Esophagus muscularis mucosa (tissue), 4 donors: ENCODE measurements at regions of chr9 and their contacts with region 1.

Region 1: GRCh38 chr9:95004411-95005277 is 278.1 kb downstream of the AOPEP start:
- DNase-seq: no peak
- H3K4me3 ChIP-seq: peak overlapping the region; percentile 74 to 93 (median 90)
- H3K27ac ChIP-seq: peak overlapping the region; percentile 98 to 100 (median 98)
- H3K4me1 ChIP-seq: peaks cover 13 to 58% (median 53%) of the 10 kb centered on the region in 4 donors
- H3K27me3 ChIP-seq: no peaks in the 10 kb centered on the region
- CTCF ChIP-seq: no peak
- EP300 ChIP-seq: no peak
- POLR2A ChIP-seq: no peak

Region 2: GRCh38 chr9:94783102-94783664 is 221.5 kb before region 1 on chr9:
- intact Hi-C with region 1: loop called (anchors 5 kb)
- DNase-seq: no peak
- H3K4me3 ChIP-seq: no peak overlapping the region
- H3K27ac ChIP-seq: peak overlapping the region; percentile 13 to 40 (median 31)
- H3K4me1 ChIP-seq: peaks cover 9 to 16% (median 12%) of the 10 kb centered on the region in 4 donors
- H3K27me3 ChIP-seq: no peaks in the 10 kb centered on the region
- CTCF ChIP-seq: peak; percentile 67 to 81 (median 77)
- EP300 ChIP-seq: no peak
- POLR2A ChIP-seq: no peak

Region 3: DNA sequence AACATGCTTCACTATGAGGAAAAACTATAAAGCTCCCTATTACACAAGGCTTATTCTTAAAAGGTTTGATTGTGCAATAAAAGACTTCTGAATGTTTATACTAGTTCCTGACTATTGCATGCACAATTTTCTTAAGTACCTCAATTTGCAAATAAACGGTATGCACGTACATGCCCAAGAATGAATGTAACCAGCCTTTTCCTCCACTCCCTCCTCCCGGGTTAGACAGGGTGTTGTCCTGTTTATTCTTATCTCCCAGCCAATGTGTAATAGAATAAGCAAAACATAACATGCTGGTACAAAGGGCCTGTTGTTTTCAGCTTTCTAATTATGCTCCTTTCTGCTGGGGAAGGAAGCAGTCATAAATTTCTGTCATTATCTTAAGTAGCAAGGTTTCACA is 199.1 kb before region 1 on chr9:
- intact Hi-C with region 1: loop called (anchors 5 kb)
- DNase-seq: no peak
- H3K4me3 ChIP-seq: no peak overlapping the region
- H3K27ac ChIP-seq: peak overlapping the region; percentile 16 to 65 (median 54)
- H3K4me1 ChIP-seq: peaks cover 40 to 66% (median 47%) of the 10 kb centered on the region in 4 donors
- H3K27me3 ChIP-seq: no peaks in the 10 kb centered on the region
- CTCF ChIP-seq: no peak
- EP300 ChIP-seq: no peak
- POLR2A ChIP-seq: no peak

Region 4: GRCh38 chr9:94867281-94867841 is 137.3 kb before region 1 on chr9:
- intact Hi-C with region 1: loop called (anchors 5 kb)
- DNase-seq: no peak
- H3K4me3 ChIP-seq: peak overlapping the region in 2 of 4 donors; percentile 1 to 17
- H3K27ac ChIP-seq: peak overlapping the region; percentile 80 to 88 (median 86)
- H3K4me1 ChIP-seq: peaks cover 50 to 73% (median 64%) of the 10 kb centered on the region in 4 donors
- H3K27me3 ChIP-seq: no peaks in the 10 kb centered on the region
- CTCF ChIP-seq: no peak
- EP300 ChIP-seq: no peak
- POLR2A ChIP-seq: no peak

Region 5: DNA sequence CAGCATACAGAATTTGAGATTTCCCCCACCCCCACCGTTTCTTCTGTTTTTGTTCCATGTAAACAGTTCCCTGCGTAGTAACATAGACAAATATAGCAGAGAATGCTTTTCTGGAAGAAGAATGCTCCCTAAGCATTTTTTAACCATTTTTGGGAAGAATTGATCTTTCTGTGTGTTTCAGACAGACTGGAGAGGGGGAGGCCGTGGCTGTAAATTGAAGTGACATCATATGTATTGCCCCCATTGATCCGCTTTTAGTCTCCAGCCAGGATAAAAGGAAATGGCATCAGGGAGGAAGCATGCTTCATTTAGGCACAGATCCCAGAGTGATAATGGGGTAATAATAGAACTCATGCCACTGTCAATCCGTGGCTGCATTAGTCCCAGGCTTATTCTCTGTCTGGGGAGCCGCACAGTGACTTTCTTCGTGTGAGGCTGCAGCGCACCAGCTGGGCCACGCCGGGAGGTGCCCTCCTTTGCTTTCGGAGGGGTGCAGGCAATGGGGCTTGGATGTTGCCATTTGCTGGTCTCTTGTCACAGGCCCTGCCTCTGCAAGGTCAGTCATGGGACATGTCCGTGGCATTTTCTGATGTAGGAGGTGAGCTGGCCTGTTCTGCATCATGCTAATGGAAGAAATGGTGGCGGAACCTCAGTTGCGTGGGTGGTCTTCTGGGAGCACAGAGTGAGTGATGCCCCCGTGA is 51.4 kb after region 1 on chr9:
- intact Hi-C with region 1: loop called (anchors 5 kb)
- DNase-seq: no peak
- H3K4me3 ChIP-seq: peak overlapping the region; percentile 36 to 49 (median 44)
- H3K27ac ChIP-seq: peak overlapping the region; percentile 86 to 95 (median 87)
- H3K4me1 ChIP-seq: peaks cover 92 to 100% (median 98%) of the 10 kb centered on the region in 4 donors
- H3K27me3 ChIP-seq: no peaks in the 10 kb centered on the region
- CTCF ChIP-seq: no peak
- EP300 ChIP-seq: no peak
- POLR2A ChIP-seq: no peak